ENCODE measurements at regions of chr6 and their contacts with region 1.

Region 1: DNA sequence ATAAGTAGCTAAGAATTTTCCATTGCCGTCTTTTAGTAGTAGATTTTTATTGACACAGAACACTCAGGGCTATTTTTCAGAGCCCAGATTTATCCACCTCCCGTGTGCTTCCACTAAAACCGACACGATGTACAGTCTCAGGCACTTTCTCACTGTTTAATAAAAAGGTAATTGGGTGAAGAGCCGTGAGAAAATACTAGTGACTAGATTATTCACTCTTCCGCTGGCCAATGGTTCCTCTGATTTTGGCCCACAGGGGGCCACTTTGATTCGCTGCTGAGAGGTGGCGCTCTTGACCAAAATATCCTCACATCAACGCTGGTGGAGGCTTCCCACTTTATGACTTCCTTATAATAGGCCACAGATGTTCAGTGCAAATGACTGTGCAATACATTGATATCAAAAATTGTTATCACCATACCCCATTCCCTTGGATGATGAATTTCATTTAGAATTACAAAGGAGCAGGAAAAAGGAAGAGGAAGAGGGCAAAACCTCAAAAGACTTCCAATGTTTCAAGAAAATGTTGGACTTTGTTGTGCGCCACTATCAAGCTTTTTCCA is 12.3 kb upstream of the HDDC2 start:
- DNase-seq: peak; percentile 53
- H3K4me3 ChIP-seq: no peak overlapping the region
- H3K27ac ChIP-seq: no peak overlapping the region
- H3K4me1 ChIP-seq: no peaks in the 10 kb centered on the region
- H3K27me3 ChIP-seq: no peaks in the 10 kb centered on the region
- CTCF ChIP-seq: peak in 3 of 4 experiments; percentile 51 to 81 (median 64)
- POLR2A ChIP-seq: no peak

Region 2: GRCh38 chr6:125380474-125380873 is 66.4 kb after region 1 on chr6:
- intact Hi-C with region 1: no loop called
- DNase-seq: no peak
- H3K4me3 ChIP-seq: no peak overlapping the region
- H3K27ac ChIP-seq: no peak overlapping the region
- H3K4me1 ChIP-seq: no peaks in the 10 kb centered on the region
- H3K27me3 ChIP-seq: no peaks in the 10 kb centered on the region
- CTCF ChIP-seq: no peak
- POLR2A ChIP-seq: no peak

Region 3: DNA sequence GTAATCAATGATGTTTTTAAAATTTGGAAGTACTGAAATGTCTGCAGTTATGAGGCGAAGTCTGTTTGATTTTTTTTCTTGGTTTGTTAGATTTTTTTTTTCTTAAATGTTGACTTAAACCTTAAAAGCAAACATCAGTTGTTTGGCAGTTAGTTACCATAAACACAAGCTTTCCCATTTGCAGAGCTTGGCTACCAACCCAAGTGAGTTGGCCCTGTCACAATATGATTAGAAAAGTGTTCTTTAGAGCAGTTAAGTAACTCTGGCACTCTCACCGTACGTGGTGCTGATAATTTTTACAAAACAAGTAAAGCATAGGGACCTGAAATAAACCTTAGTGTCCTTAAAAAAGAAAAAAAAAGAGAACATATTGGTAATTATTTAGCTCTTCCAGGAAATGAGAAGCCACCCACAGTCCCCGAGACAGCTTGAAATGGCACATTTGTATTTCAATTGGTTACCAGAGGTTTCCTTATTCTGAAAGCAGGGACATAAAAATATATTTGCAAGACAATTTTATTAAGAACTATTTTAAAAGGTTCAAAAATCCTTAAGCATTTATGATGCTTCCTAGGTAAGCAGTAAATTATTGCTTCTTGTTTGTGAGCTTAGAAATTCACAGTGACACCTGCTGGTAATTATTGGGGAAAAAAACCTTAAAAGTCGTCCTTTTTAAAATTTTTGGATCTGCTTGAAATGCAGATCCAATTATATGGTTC is 439.3 kb after region 1 on chr6:
- intact Hi-C with region 1: loop called (anchors 5 kb)
- DNase-seq: no peak
- H3K4me3 ChIP-seq: no peak overlapping the region
- H3K27ac ChIP-seq: no peak overlapping the region
- H3K4me1 ChIP-seq: peaks cover 4% of the 10 kb centered on the region
- H3K27me3 ChIP-seq: no peaks in the 10 kb centered on the region
- CTCF ChIP-seq: peak in 3 of 4 experiments; percentile 20 to 51 (median 28)
- POLR2A ChIP-seq: no peak

Region 4: DNA sequence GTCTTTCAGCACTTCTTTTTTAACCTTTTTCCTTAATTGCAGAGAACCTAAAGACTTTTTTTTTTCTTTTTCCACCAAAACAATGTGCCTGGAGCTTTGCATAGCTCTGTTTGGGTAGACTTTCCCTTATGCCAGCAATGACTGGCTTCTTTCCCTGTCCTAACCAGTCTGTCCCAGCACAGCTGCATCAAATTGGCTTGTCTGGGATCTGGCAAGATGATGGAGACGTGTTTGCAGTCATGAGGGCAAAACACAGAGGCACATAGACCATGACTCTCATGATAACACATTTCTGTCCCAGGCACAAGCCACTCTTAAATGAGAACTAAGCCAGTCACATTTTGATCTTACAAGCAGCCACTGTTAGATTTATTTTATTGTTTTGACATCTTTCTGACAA is 451.8 kb after region 1 on chr6:
- intact Hi-C with region 1: loop called (anchors 2 kb)
- DNase-seq: no peak
- H3K4me3 ChIP-seq: no peak overlapping the region
- H3K27ac ChIP-seq: no peak overlapping the region
- H3K4me1 ChIP-seq: no peaks in the 10 kb centered on the region
- H3K27me3 ChIP-seq: no peaks in the 10 kb centered on the region
- CTCF ChIP-seq: no peak
- POLR2A ChIP-seq: no peak

Measured in prostate gland (tissue), 2 donors.